Mammary epithelial cell (primary cell): ENCODE measurements at regions of chr15 and their contacts with region 1.

Region 1: GRCh38 chr15:60070838-60071493 is 66.9 kb downstream of the FOXB1 start:
- DNase-seq: peak; percentile 86
- H3K4me3 ChIP-seq: peak overlapping the region in 1 of 3 experiments; percentile 23
- H3K27ac ChIP-seq: peak overlapping the region; percentile 56
- H3K4me1 ChIP-seq: peaks cover 19% of the 10 kb centered on the region
- H3K27me3 ChIP-seq: no peaks in the 10 kb centered on the region
- CTCF ChIP-seq: no peak

Region 2: DNA sequence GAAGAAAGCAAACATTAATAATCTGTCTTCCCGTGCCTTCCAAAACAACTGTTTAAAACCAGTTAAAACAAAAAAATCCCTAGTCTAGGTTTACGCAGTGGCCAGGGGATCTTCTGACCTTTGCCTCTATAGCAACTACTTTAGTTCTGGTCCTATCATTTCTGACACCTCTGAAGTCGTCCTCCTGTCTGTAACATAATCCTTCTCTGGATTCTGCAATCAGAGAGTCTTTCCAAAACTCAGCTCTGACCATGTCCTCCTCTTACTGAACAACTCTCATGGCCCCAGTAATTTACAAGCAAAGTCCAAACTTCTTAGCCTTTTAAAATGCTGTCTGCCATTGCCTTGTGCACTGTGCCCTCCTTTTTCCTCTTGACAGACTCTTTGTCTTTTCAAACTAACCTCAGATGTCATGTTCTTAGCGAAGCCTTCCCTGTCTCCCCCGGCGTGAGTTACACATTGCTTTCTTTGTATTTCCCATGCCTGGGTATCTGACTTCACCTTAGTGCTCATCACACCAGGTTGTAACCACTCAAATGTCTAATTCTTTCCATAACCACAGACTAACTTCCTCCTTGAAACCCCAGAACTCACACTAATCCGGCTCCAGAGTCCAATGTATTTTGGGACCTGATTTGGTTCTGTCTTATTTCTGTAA is 276.6 kb before region 1 on chr15:
- CTCF ChIA-PET with region 1: no interaction called
- dilution Hi-C with region 1: no loop called
- in situ Hi-C with region 1: no loop called
- intact Hi-C with region 1: no loop called
- DNase-seq: peak; percentile 37
- H3K4me3 ChIP-seq: no peak overlapping the region
- H3K27ac ChIP-seq: no peak overlapping the region
- H3K4me1 ChIP-seq: no peaks in the 10 kb centered on the region
- H3K27me3 ChIP-seq: no peaks in the 10 kb centered on the region
- CTCF ChIP-seq: no peak

Region 3: DNA sequence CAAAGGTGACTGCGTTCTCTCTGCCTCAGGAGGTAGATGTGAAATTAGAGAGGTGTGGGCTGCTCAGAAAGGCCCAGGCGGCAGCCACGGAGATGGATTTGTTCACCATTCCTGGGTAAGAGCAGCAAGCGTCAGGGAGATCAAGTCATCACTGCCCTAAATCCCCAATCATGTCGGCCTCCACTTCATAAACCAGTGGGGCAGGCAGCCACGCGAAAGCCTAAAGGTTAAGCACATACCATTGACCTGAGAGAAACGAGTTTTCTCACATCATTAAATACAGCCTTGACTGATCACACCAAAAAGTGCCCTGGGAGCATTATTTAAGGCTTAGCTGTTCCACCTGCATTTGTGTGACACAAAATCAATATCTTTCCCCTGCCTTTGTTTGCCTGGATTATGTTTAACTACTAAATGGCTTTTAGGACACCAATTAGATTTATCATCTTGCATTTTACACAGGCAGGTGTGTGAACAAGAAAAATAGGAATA is 117.5 kb before region 1 on chr15:
- CTCF ChIA-PET with region 1: no interaction called
- dilution Hi-C with region 1: no loop called
- in situ Hi-C with region 1: no loop called
- intact Hi-C with region 1: no loop called
- DNase-seq: no peak
- H3K4me3 ChIP-seq: no peak overlapping the region
- H3K27ac ChIP-seq: no peak overlapping the region
- H3K4me1 ChIP-seq: no peaks in the 10 kb centered on the region
- H3K27me3 ChIP-seq: no peaks in the 10 kb centered on the region
- CTCF ChIP-seq: no peak

Region 4: DNA sequence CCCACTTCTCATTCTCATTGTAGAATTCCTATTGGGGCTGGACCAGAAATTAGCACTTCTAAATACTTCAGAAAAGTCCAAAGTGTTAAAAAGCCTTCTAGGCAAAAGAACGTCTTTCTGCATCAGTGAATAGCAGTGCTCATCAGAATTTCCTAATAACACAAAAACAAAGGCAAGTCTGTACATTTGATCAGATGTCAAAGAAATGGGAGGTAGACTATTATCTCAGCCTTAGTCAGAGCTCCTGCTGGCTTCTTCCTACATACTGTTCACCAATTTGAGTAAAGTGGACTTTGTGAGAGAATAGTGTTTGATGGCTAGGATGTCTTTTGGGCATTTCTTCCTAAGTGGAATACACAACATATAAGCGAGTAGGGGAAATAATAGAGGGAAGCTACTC is 18.2 kb before region 1 on chr15:
- CTCF ChIA-PET with region 1: interaction called, 27 read pairs
- dilution Hi-C with region 1: no loop called
- in situ Hi-C with region 1: no loop called
- intact Hi-C with region 1: no loop called
- DNase-seq: peak; percentile 88
- H3K4me3 ChIP-seq: no peak overlapping the region
- H3K27ac ChIP-seq: peak overlapping the region; percentile 68
- H3K4me1 ChIP-seq: peaks cover 43% of the 10 kb centered on the region
- H3K27me3 ChIP-seq: no peaks in the 10 kb centered on the region
- CTCF ChIP-seq: no peak